Breast epithelium (tissue), 4 donors: ENCODE measurements at regions of chr3 and their contacts with region 1.

Region 1: GRCh38 chr3:43162230-43163084 is 56.6 kb upstream of the POMGNT2 start:
- DNase-seq: no peak
- H3K4me3 ChIP-seq: peak overlapping the region in 1 of 3 donors; percentile 31
- H3K27ac ChIP-seq: no peak overlapping the region
- H3K4me1 ChIP-seq: no peaks in the 10 kb centered on the region
- H3K27me3 ChIP-seq: peaks cover 0 to 6% of the 10 kb centered on the region in 2 donors
- CTCF ChIP-seq: peak in 2 of 3 donors; percentile 22 to 33
- POLR2A ChIP-seq: no peak

Region 2: DNA sequence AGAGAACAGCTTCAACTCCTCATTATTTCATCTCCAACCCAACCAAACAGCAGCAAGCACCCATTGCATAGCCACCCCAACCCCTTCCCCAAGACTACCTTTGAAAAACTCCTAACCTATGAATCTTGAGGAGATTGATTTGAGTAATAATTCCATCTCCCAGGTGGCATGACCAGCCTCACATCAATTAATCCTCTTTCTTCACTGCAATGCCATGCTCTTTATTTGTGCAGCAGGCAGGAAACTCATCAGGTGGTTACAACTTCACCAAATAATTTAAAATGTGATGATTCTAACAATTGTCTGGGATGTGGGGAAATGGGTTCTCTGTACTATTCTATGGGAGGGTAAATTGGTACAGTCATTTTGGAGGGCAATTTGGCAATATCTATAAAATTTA is 11.5 kb after region 1 on chr3:
- intact Hi-C with region 1: loop called (anchors 1 kb)
- DNase-seq: no peak
- H3K4me3 ChIP-seq: no peak overlapping the region
- H3K27ac ChIP-seq: no peak overlapping the region
- H3K4me1 ChIP-seq: no peaks in the 10 kb centered on the region
- H3K27me3 ChIP-seq: no peaks in the 10 kb centered on the region
- CTCF ChIP-seq: no peak
- POLR2A ChIP-seq: no peak